ENCODE measurements at regions of chr16 and their contacts with region 1.

Region 1: GRCh38 chr16:4402439-4403132 is 13.8 kb downstream of the CORO7 start:
- DNase-seq: no peak
- H3K4me3 ChIP-seq: no peak overlapping the region
- H3K27me3 ChIP-seq: no peaks in the 10 kb centered on the region
- CTCF ChIP-seq: peak; percentile 88

Region 2: DNA sequence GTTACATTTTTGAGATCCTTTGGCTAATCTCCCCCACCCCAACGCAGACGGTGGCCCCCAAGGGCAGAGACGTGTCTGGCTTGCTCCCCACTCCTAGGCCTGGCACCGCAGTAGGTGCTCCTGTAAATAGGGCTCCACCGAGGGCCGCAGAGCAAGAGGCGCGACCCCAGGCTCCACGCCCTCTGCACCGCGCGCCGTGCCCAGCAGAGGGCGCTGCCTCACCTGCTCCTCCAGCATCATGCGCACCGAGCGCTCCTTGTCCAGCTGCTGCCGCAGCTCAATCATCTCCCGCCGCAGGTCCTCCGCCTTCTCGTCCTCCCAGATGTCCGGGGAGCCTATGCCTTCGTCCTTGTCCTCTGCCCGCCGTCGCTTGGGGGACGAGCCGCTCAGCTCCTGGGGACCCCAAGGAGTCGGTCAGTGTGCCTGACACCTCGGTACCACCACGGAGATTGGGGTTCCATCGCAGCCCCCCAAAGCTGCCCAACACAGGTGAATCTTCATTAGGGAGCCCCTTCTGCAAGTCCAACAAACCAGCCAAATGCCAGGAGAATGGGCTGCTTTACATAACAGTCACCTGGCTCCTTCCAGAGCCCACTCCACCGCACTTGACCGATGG is 140.9 kb before region 1 on chr16:
- CTCF ChIA-PET with region 1: interaction called, 11 read pairs
- POLR2A ChIA-PET with region 1: no interaction called
- DNase-seq: no peak
- H3K4me3 ChIP-seq: no peak overlapping the region
- H3K27me3 ChIP-seq: no peaks in the 10 kb centered on the region
- CTCF ChIP-seq: peak; percentile 66

Region 3: DNA sequence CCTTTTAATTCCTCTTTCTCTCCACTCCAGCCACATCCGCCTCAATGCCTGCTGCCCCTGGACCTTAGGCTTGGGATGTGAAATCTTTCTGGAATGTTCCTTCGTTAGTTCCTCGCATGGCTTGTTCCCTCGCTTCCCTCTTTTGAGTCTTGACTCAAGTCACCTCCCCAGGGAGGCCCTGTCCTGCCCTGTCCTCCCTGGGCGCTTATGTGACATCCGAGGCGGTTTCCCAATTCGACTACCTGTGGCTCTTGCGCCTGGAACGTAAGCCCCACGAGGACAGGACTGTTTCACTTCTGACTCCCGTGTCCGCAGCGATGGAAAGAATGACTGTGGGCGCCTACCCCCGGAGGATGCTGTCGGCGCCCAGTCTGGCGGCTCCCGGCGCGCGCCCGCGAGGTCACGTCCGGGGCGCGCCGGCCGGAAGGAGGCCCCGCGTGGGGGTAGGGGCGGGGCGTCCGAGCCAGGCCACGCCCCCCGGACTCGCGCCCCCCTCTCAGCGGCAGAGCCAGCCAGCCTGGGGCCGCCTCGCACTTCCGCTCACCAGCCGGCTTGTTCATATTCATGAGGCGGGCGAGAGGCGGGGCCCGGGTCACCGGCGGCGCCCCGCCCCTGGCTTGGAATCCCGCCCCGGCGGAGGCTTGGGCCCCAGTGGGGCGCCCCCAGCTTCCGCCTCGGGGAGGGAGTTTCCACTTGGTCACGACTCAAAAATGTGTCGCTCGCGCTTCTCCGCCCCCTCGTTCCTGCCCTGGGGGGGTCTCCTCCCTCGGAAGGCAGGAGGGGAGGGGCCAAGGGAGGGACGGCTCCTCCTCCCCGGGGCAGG is 95.2 kb before region 1 on chr16:
- CTCF ChIA-PET with region 1: interaction called, 12 read pairs
- POLR2A ChIA-PET with region 1: no interaction called
- DNase-seq: peak; percentile 81
- H3K4me3 ChIP-seq: peak overlapping the region; percentile 59
- H3K27me3 ChIP-seq: no peaks in the 10 kb centered on the region
- CTCF ChIP-seq: no peak

Region 4: GRCh38 chr16:4339909-4340308 is 62.7 kb before region 1 on chr16:
- CTCF ChIA-PET with region 1: interaction called, 39 read pairs
- POLR2A ChIA-PET with region 1: no interaction called
- DNase-seq: no peak
- H3K4me3 ChIP-seq: no peak overlapping the region
- H3K27me3 ChIP-seq: no peaks in the 10 kb centered on the region
- CTCF ChIP-seq: peak; percentile 26; the same call in 1 of the 2 replicates

Region 5: GRCh38 chr16:4350787-4351659 is 51.6 kb before region 1 on chr16 and contains the start of gene PAM16:
- CTCF ChIA-PET with region 1: interaction called, 109 read pairs
- POLR2A ChIA-PET with region 1: no interaction called
- DNase-seq: peak; percentile 57
- H3K4me3 ChIP-seq: peak within 1 kb of the TSS; percentile 91
- H3K27me3 ChIP-seq: no peaks in the 10 kb centered on the region
- CTCF ChIP-seq: 0 out of 2 replicates have a peak, but pooled peaks have one; percentile 13
- polyA plus RNA-seq, gene PAM16: 33.1 and 44.2 TPM in 2 replicates

Region 6: GRCh38 chr16:4371357-4372000 is 31.1 kb before region 1 on chr16 and contains the start of gene VASN:
- CTCF ChIA-PET with region 1: interaction called, 86 read pairs
- POLR2A ChIA-PET with region 1: no interaction called
- DNase-seq: no peak
- H3K4me3 ChIP-seq: peak within 1 kb of the TSS; percentile 97
- H3K27me3 ChIP-seq: no peaks in the 10 kb centered on the region
- CTCF ChIP-seq: no peak
- polyA plus RNA-seq, gene VASN: 30.0 and 71.6 TPM in 2 replicates

Region 7: DNA sequence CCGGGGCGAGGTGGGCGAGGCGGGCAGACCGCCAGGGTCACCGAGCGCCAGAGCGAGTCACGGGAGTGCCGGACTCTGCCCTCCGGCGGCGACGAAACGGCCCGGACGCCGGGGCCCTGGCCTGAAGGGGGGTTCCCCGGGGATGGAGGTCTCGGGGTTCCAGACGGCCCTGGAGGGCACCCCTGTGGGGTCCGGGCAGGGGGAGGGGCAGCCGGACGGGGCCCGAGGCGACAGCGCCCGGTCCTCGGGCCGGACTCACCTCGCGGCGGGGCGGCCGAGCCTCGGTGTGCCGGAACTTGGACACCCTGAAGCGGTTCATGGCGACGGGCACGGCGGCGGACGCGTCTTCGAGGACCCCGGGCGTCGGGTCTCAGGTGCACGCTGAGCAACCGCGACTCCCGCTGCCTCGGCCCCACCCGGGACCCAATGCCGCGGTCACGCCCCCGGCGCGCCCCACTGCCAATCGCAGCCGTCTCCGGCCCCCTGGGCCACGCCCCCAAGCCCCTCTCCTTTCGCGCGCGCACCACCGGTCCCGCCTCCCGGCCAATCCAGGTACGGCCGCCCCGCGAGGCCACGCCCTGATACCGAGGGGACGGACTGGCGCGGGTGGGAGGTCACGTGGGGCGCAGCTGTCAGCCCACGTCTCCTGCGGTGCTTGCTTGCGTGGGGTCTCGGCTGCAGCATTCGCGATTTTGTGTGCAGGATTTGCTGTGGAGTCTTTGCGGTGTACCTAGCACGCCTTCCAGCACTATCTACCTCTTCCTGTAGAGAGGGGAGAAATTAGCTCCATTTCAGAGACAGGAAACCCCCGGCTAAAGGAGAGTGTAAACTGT is 13.8 kb after region 1 on chr16 and contains the start of gene CORO7:
- CTCF ChIA-PET with region 1: interaction called, 40 read pairs
- POLR2A ChIA-PET with region 1: no interaction called
- DNase-seq: peak; percentile 50
- H3K4me3 ChIP-seq: peak within 1 kb of the TSS; percentile 87
- H3K27me3 ChIP-seq: no peaks in the 10 kb centered on the region
- CTCF ChIP-seq: no peak
- polyA plus RNA-seq, gene CORO7: 5.3 and 13.8 TPM in 2 replicates

Region 8: DNA sequence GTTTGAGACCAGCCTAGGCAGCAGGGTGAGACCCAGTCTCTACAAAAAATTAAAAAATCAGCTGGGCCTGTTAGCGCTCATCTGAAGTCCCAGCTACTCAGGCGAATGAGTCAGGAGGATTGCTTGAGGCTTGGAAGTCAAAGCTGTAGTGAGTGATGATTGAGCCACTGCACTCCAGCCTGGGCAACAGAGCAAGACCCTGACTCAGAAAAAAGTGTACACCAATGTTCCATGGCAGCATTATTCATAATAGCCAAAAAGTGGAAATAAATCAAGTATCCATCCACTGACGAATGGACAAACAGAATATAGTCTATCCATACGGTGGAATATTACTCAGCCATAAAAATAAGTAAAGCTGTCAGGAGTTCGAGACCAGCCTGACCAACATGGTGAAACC is 69.3 kb after region 1 on chr16:
- CTCF ChIA-PET with region 1: no interaction called
- POLR2A ChIA-PET with region 1: no interaction called
- DNase-seq: no peak
- H3K4me3 ChIP-seq: no peak overlapping the region
- H3K27me3 ChIP-seq: no peaks in the 10 kb centered on the region
- CTCF ChIP-seq: no peak

Measured in BJ (cell line).